Right ventricle myocardium inferior (tissue), 1 donor: ENCODE measurements at regions of chr9 and their contacts with region 1.

Region 1: GRCh38 chr9:68836788-68837187 is 131.7 kb downstream of the PIP5K1B start:
- DNase-seq: no peak
- ATAC-seq: no peak

Region 2: DNA sequence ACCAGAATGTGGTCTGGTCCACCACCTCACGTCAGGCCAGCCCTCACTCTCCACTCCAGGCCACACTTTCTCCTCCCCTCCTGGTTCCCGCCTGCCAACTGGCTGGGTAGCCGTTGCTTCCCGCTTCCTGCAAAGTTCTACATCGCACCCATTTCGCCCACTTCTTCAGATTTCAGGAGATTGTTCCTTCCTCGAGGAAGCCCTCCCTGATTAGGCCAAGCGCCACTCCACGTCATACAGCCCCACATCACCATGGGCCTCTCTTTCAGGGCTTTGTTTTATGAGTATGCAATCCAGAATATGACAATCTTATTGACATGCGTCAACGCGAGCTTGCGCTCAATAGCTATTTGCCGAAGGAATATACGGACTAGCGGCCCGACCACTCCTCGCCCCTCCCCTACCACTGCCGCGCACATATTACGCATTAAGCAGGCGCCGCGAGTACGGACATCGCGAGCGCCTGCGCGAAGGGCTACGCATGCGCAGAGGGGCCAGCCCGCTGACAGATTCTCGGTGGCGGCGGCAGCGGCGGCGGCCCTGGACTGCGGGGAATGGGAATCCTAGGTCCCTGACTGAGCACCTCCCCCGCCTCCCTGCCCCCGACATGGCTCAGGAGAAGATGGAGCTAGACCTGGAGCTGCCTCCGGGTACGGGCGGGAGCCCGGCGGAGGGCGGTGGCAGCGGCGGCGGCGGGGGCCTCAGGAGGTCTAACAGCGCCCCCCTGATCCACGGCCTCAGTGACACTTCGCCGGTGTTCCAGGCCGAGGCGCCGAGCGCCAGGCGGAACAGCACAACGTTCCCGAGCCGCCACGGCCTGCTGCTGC is 57.0 kb before region 1 on chr9:
- intact Hi-C with region 1: loop called (anchors 5 kb)
- DNase-seq: peak; percentile 98
- ATAC-seq: peak; percentile 95

Region 3: DNA sequence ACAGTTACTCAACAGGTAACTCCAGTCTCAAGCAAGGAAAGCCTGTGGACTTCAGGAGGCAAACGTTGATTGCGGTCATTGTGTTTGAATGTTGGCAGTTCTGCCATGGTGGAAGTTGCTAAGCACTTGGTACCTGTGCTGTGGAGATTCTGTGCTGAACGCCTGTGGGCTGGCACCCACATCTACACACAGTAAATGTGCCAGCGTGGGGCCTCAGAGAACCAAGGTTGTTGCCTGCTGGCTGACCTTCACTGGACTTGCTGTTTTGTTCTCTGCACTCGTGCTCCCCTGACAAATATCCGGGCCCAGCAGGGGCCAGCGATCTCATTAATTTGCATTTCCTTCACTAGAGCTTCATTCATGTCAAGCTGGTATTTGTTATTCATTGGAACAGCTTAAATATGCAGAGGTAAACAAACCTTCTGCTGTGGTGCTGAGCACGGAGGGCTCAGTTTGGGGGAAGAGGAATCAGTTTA is 35.3 kb after region 1 on chr9:
- intact Hi-C with region 1: no loop called
- DNase-seq: peak; percentile 73
- ATAC-seq: peak; percentile 95